ENCODE measurements at regions of chr10 and their contacts with region 1.

Region 1: DNA sequence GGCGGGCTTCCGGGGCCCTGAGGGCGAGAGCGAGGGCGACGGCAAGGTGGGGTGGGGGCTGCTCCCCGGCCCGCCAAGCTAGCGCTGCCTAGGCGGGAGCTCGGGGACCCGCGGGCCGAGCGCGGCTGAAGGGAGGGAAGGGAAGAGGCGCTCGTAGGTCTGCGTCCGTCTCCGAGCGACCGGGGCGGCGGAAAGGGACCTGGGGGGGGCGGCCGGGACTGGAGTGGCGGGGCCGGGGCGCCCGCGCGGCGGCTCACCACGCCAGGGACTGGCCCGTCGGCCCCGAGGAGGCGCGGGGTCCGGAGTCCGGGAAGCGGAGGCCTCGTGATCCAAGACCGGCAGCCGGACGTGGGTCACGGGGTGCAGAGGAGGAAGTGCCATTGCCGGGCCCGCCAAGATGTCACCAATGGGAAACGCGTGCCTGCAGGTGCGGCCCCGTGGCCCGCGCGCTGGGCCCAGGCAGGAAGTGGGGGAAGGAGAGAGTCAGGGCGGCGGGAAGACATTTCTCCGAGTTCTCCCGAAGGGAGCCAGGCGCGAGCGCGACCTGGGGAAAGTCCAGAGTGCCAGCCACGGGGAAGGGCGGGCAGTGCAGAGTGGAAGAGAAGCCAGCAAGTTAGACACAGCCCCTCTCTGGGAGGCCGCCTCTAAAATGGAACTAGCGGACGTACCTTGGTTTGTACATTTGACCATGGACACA is 11.9 kb downstream of the HNRNPF start:
- DNase-seq: peak; percentile 89
- H3K4me3 Mint-ChIP-seq: peak overlapping the region; percentile 90
- H3K27ac Mint-ChIP-seq: peak overlapping the region; percentile 93
- H3K4me1 Mint-ChIP-seq: peaks cover 76% of the 10 kb centered on the region
- H3K27me3 Mint-ChIP-seq: no peaks in the 10 kb centered on the region

Region 2: DNA sequence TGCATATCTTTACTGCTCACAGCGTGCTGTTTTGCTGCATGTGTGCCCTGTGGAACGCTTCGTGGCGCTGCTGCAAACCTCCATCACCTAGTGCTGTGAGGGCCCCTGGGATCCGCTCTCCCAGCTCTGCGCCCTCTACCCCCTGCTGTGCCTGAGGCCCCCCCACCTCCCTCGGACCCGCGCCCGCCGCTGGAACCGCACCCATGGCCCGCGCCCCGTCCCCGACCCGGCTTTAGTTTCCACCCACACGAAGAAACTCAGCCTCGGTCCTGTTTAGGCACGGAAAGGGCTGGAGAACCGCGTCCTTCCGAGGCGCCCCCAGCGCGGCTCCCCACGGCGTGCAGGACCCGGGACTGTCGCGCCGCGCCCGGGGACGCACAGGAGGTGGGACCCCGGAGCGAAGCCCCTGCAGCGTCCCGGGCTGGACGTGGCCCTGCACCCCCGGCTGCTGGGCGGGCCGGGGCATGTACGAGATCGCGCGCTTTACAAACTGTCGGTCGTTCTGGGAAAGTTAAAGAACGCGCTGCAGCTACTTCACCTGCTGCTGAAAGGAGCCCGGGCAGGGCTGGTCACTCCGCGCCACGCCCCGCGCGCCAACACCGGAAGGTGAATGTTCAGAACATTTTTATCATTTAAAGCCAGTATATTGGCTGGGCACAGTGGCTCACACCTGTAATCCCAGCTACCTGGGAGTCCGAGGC is 560.2 kb before region 1 on chr10:
- CTCF ChIA-PET with region 1: no interaction called
- POLR2A ChIA-PET with region 1: no interaction called
- DNase-seq: no peak
- H3K4me3 Mint-ChIP-seq: peak overlapping the region; percentile 30
- H3K27ac Mint-ChIP-seq: no peak overlapping the region
- H3K4me1 Mint-ChIP-seq: peaks cover 2% of the 10 kb centered on the region
- H3K27me3 Mint-ChIP-seq: peaks cover 13% of the 10 kb centered on the region

Region 3: DNA sequence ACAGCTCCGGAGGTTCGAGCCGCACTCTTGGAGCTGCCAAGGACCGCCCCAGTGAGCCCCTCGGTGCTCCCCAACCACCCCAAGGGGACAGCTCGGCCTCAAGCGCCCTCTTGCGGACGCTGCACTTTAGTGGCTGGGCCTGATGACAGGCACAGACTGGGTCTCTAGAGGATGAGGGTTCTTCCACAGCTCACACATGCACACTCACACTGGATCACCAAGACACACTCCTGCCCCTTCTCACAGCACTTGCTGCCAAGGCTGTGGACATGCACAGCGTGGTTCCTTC is 318.1 kb before region 1 on chr10:
- CTCF ChIA-PET with region 1: no interaction called
- POLR2A ChIA-PET with region 1: no interaction called
- DNase-seq: peak; percentile 37
- H3K4me3 Mint-ChIP-seq: no peak overlapping the region
- H3K27ac Mint-ChIP-seq: no peak overlapping the region
- H3K4me1 Mint-ChIP-seq: peaks cover 10% of the 10 kb centered on the region
- H3K27me3 Mint-ChIP-seq: peaks cover 41% of the 10 kb centered on the region

Region 4: GRCh38 chr10:43278216-43278615 is 118.9 kb before region 1 on chr10:
- CTCF ChIA-PET with region 1: no interaction called
- POLR2A ChIA-PET with region 1: no interaction called
- DNase-seq: no peak
- H3K4me3 Mint-ChIP-seq: no peak overlapping the region
- H3K27ac Mint-ChIP-seq: no peak overlapping the region
- H3K4me1 Mint-ChIP-seq: peaks cover 6% of the 10 kb centered on the region
- H3K27me3 Mint-ChIP-seq: peaks cover 49% of the 10 kb centered on the region

Region 5: GRCh38 chr10:43292755-43293676 is 104.1 kb before region 1 on chr10:
- CTCF ChIA-PET with region 1: interaction called, 8 read pairs
- POLR2A ChIA-PET with region 1: interaction called, 10 read pairs
- DNase-seq: peak; percentile 68
- H3K4me3 Mint-ChIP-seq: peak overlapping the region; percentile 19
- H3K27ac Mint-ChIP-seq: peak overlapping the region; percentile 76
- H3K4me1 Mint-ChIP-seq: peaks cover 85% of the 10 kb centered on the region
- H3K27me3 Mint-ChIP-seq: peaks cover 7% of the 10 kb centered on the region

Region 6: GRCh38 chr10:43361986-43362839 is 34.9 kb before region 1 on chr10:
- CTCF ChIA-PET with region 1: interaction called, 3 read pairs
- POLR2A ChIA-PET with region 1: interaction called, 37 read pairs
- DNase-seq: peak; percentile 99
- H3K4me3 Mint-ChIP-seq: peak overlapping the region; percentile 91
- H3K27ac Mint-ChIP-seq: peak overlapping the region; percentile 88
- H3K4me1 Mint-ChIP-seq: peaks cover 37% of the 10 kb centered on the region
- H3K27me3 Mint-ChIP-seq: no peaks in the 10 kb centered on the region

Region 7: GRCh38 chr10:43383204-43383971 is 13.7 kb before region 1 on chr10:
- CTCF ChIA-PET with region 1: interaction called, 4 read pairs
- POLR2A ChIA-PET with region 1: interaction called, 13 read pairs
- DNase-seq: no peak
- H3K4me3 Mint-ChIP-seq: no peak overlapping the region
- H3K27ac Mint-ChIP-seq: no peak overlapping the region
- H3K4me1 Mint-ChIP-seq: peaks cover 33% of the 10 kb centered on the region
- H3K27me3 Mint-ChIP-seq: no peaks in the 10 kb centered on the region

Region 8: GRCh38 chr10:43420369-43421200 is 23.5 kb after region 1 on chr10:
- CTCF ChIA-PET with region 1: no interaction called
- POLR2A ChIA-PET with region 1: interaction called, 136 read pairs
- DNase-seq: peak; percentile 90
- H3K4me3 Mint-ChIP-seq: peak overlapping the region; percentile 85
- H3K27ac Mint-ChIP-seq: peak overlapping the region; percentile 99
- H3K4me1 Mint-ChIP-seq: peaks cover 47% of the 10 kb centered on the region
- H3K27me3 Mint-ChIP-seq: no peaks in the 10 kb centered on the region

Region 9: DNA sequence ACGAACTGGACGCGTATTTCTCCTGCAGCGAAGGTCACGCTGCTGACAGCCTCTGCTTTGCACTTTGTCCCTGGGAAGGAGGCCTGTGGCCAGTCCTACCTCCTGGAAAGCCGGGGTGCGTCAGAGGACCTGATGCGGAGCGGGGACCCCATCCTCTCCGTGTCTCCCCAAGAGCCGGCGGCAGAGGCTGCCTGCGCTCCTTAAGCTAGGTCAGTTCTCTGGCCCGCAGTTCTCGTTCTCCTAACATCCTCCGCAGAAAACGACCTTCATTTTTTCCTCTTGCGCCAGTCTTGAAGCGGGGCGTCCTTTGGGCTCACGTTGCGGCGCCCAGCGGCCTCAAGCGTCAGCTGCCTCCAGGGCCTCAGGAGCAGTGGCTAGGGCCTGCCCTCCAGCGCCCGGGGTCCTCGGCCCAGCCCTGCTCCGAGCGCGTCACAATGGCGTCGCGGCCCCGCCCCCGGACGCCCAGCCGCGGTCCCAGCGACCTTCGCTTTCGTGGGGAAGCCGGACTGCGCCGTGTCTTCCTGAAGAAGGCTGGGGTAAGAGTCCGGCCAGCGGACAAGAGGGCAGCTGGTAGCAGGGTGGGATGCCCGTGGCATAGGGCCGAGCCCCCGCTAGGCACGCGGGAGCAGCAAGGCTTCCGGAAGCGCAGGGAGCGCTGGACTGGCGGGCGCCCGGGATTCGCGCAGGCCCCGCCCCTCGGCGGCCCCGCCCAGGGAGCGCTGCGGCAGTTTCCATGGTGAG is 39.5 kb after region 1 on chr10 and contains the start of gene ZNF487:
- CTCF ChIA-PET with region 1: interaction called, 4 read pairs
- POLR2A ChIA-PET with region 1: interaction called, 21 read pairs
- DNase-seq: peak; percentile 92
- H3K4me3 Mint-ChIP-seq: peak within 1 kb of the TSS; percentile 95
- H3K27ac Mint-ChIP-seq: peak within 1 kb of the TSS; percentile 95
- H3K4me1 Mint-ChIP-seq: peaks cover 32% of the 10 kb centered on the region
- H3K27me3 Mint-ChIP-seq: no peaks in the 10 kb centered on the region
- total RNA-seq, gene ZNF487: 6.1 TPM

Region 10: DNA sequence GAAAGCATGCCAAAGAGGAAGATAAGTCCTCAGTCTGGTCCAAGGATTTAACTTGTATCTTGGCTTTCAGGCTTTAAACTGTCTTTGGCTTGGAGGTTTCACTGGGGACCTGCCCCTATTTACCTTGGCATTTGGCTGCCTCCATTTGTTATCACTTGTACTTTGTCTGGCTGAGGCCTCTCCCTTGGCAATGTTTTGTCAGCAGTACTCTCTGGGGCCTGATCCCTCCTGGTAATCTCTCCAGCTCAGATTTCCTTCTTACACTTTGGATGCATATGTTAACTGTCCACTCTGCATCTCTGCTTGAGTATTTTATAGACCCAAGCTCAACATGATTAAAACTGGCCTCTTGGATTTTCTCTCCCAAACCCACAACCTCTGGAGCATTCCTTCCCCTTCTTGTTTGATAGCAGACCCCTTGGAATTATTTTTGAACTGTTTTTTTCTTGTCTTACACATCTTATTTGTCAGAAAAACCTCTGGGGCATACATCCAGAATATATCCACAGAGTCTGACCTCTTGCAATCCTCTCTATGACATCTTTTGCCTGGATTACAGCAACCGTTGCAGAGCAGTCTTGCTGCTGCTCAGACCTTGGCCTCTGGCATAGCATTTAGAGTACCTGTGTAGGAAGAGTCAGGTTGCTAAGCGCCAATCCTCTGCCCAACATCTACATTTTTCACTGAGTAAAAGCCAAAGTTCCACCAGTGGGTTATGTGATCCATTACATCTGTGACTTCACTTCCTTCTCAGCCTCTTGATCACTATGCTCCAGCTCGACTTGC is 75.1 kb after region 1 on chr10:
- CTCF ChIA-PET with region 1: no interaction called
- POLR2A ChIA-PET with region 1: no interaction called
- DNase-seq: no peak
- H3K4me3 Mint-ChIP-seq: no peak overlapping the region
- H3K27ac Mint-ChIP-seq: no peak overlapping the region
- H3K4me1 Mint-ChIP-seq: no peaks in the 10 kb centered on the region
- H3K27me3 Mint-ChIP-seq: no peaks in the 10 kb centered on the region